Endothelial cell of umbilical vein (primary cell): ENCODE measurements at regions of chr1 and their contacts with region 1.

Region 1: DNA sequence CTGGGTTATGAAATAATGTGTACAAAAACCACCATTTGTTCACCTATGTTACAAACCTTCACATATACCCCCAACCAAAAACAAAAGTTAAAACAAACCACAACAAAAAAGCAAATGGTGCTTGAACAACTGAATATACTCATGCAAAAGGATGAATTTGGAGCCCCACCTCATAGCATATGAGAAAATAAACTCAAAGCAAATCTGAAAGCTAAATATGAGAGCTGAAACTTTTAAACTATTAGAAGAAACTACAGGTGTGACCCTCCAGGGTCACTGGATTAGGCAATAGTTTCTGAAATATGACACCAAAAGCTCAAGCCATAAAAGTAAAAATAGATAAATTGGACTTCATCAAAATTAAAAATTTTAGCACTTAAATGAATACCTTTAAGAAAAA is 215.5 kb upstream of the CHRM3 start:
- DNase-seq: no peak
- H3K4me3 ChIP-seq: no peak overlapping the region
- H3K27ac ChIP-seq: no peak overlapping the region
- H3K4me1 ChIP-seq: no peaks in the 10 kb centered on the region
- H3K27me3 ChIP-seq: no peaks in the 10 kb centered on the region
- CTCF ChIP-seq: no peak
- POLR2A ChIP-seq: no peak

Region 2: DNA sequence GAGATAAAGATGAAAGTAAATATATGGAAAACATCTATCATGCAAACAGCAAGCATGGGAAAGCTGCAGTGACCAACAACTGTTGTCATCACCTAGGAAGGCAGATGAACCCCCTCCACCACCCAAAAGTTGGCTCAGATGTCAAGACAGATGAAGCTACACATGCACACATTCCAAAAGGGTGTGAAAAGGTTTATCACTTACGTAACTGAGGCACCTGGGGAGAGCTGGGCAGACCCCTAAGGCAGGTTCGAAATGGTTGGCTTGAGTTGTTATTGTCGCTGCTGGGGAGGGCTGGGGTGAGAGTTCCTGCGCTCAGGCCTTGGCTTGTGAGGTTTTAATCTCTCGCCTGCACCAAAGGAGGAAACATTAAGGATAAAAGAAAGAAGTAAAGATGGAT is 139.5 kb before region 1 on chr1:
- CTCF ChIA-PET with region 1: no interaction called
- POLR2A ChIA-PET with region 1: no interaction called
- dilution Hi-C with region 1: no loop called
- intact Hi-C with region 1: no loop called
- DNase-seq: no peak
- H3K4me3 ChIP-seq: no peak overlapping the region
- H3K27ac ChIP-seq: no peak overlapping the region
- H3K4me1 ChIP-seq: no peaks in the 10 kb centered on the region
- H3K27me3 ChIP-seq: no peaks in the 10 kb centered on the region
- CTCF ChIP-seq: no peak
- POLR2A ChIP-seq: no peak

Region 3: GRCh38 chr1:239189998-239190512 is 19.2 kb after region 1 on chr1:
- CTCF ChIA-PET with region 1: no interaction called
- POLR2A ChIA-PET with region 1: no interaction called
- dilution Hi-C with region 1: no loop called
- intact Hi-C with region 1: loop called (anchors 1 kb)
- DNase-seq: no peak
- H3K4me3 ChIP-seq: no peak overlapping the region
- H3K27ac ChIP-seq: no peak overlapping the region
- H3K4me1 ChIP-seq: no peaks in the 10 kb centered on the region
- H3K27me3 ChIP-seq: no peaks in the 10 kb centered on the region
- CTCF ChIP-seq: no peak
- POLR2A ChIP-seq: no peak

Region 4: GRCh38 chr1:239274242-239274830 is 103.5 kb after region 1 on chr1:
- CTCF ChIA-PET with region 1: no interaction called
- POLR2A ChIA-PET with region 1: no interaction called
- dilution Hi-C with region 1: no loop called
- intact Hi-C with region 1: no loop called
- DNase-seq: no peak
- H3K4me3 ChIP-seq: no peak overlapping the region
- H3K27ac ChIP-seq: no peak overlapping the region
- H3K4me1 ChIP-seq: no peaks in the 10 kb centered on the region
- H3K27me3 ChIP-seq: no peaks in the 10 kb centered on the region
- CTCF ChIP-seq: no peak
- POLR2A ChIP-seq: no peak